ENCODE measurements at regions of chr5 and their contacts with region 1.

Region 1: GRCh38 chr5:142201471-142201887 is 92.9 kb downstream of the NDFIP1 start:
- DNase-seq: peak; percentile 85
- H3K4me3 ChIP-seq: no peak overlapping the region
- H3K27ac ChIP-seq: peak overlapping the region; percentile 91
- H3K4me1 ChIP-seq: peaks cover 40% of the 10 kb centered on the region
- H3K27me3 ChIP-seq: no peaks in the 10 kb centered on the region
- CTCF ChIP-seq: no peak
- POLR2A ChIP-seq: peak; percentile 58

Region 2: DNA sequence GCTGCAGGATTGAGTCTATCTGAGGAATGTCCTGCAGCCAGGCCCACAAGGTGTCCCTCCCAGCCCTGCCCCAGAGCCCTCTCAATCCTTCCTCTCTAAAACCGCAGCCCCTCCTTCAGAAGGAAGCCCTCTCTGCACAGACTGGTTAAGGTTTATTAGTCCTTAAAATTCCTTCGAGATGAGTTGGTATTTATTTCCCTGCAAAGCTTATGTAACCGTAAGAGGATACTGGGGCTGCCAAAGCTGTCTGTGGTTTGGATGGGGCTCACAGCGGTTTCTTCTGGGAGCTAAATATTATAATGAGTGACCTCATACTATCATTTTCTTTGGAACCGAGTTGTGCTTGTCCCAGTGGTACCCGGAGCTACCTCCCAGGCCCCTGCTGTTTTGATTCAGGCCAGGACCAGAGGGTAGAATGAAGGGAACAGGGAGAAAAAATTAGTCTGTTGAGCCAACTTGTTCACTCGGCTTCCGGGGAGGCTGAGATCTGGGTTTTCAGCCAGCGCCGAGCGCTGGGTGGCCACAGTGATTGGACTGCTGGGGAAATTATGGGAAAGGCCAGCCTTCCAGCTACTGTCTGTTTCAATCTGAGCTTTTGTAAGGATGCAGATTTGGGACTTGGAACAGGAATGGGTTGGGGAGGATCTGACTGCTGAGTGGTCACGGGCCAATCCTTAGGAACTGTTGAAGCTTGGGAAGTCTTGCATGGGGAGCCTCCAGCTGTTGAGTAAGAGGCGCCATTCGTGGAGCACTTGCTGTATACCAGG is 14.6 kb after region 1 on chr5:
- CTCF ChIA-PET with region 1: interaction called, 5 read pairs
- POLR2A ChIA-PET with region 1: no interaction called
- dilution Hi-C with region 1: no loop called
- intact Hi-C with region 1: loop called (anchors 1 kb)
- DNase-seq: peak; percentile 50
- H3K4me3 ChIP-seq: no peak overlapping the region
- H3K27ac ChIP-seq: peak overlapping the region; percentile 64
- H3K4me1 ChIP-seq: peaks cover 12% of the 10 kb centered on the region
- H3K27me3 ChIP-seq: no peaks in the 10 kb centered on the region
- CTCF ChIP-seq: no peak
- POLR2A ChIP-seq: no peak

Region 3: GRCh38 chr5:142246258-142246657 is 44.8 kb after region 1 on chr5:
- CTCF ChIA-PET with region 1: interaction called, 3 read pairs
- POLR2A ChIA-PET with region 1: no interaction called
- dilution Hi-C with region 1: no loop called
- intact Hi-C with region 1: loop called (anchors 1 kb)
- DNase-seq: peak; percentile 23
- H3K4me3 ChIP-seq: no peak overlapping the region
- H3K27ac ChIP-seq: peak overlapping the region; percentile 66
- H3K4me1 ChIP-seq: peaks cover 13% of the 10 kb centered on the region
- H3K27me3 ChIP-seq: no peaks in the 10 kb centered on the region
- CTCF ChIP-seq: no peak
- POLR2A ChIP-seq: no peak

Region 4: GRCh38 chr5:142316051-142316450 is 114.6 kb after region 1 on chr5:
- CTCF ChIA-PET with region 1: no interaction called
- POLR2A ChIA-PET with region 1: no interaction called
- dilution Hi-C with region 1: no loop called
- intact Hi-C with region 1: loop called (anchors 1 kb)
- DNase-seq: peak; percentile 82
- H3K4me3 ChIP-seq: no peak overlapping the region
- H3K27ac ChIP-seq: peak overlapping the region; percentile 57
- H3K4me1 ChIP-seq: peaks cover 68% of the 10 kb centered on the region
- H3K27me3 ChIP-seq: no peaks in the 10 kb centered on the region
- CTCF ChIP-seq: no peak
- POLR2A ChIP-seq: no peak

Region 5: DNA sequence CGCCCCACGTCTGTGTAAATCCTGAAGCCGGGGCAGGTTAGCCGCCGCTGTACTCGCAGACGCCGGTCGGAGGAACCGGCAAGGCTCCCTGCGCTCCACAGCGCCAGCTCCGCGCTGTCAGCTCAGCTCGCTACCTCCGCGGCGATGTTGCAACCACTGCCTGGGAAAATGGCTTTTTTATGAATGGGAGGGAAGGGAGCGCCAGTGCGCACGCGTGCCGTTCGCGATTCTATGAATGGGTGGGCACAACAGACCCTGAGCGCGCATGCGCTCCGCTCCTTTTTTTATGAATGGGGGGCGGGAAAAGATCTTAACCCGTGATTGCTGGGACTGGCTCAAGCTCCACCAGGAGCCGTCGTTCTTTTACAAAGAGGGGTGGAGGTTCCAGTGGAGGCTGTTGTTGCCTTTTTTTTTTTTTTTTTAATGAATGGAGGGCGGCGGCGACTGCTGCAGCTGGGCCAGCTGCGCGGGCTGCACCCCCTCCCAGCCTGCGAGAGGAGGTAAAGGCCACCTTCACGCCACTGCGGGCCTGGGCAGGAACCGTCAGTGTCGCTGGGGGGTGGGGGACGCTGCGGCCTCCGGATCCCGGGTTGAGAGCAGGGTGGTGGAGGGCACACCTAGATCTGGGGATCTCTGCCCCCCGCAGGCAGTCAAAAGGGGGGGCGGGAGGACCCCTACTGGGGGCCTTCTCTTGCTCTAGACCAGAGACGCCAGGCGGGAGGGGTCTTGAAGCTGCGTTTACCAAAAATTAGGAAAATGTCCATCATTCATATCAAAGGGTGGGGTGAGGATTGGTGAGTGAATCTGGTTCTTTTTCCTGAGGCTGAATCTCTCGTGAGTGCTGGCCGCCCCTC is 123.6 kb after region 1 on chr5 and contains the start of gene SPRY4:
- CTCF ChIA-PET with region 1: no interaction called
- POLR2A ChIA-PET with region 1: no interaction called
- dilution Hi-C with region 1: no loop called
- intact Hi-C with region 1: loop called (anchors 2 kb)
- DNase-seq: peak; percentile 98
- H3K4me3 ChIP-seq: peak within 1 kb of the TSS; percentile 76 to 89 (median 81)
- H3K27ac ChIP-seq: peak within 1 kb of the TSS; percentile 88
- H3K4me1 ChIP-seq: peaks cover 48% of the 10 kb centered on the region
- H3K27me3 ChIP-seq: no peaks in the 10 kb centered on the region
- CTCF ChIP-seq: no peak
- POLR2A ChIP-seq: peak; percentile 97
- total RNA-seq, gene SPRY4: 33.9 and 49.5 TPM in 2 replicates

Region 6: DNA sequence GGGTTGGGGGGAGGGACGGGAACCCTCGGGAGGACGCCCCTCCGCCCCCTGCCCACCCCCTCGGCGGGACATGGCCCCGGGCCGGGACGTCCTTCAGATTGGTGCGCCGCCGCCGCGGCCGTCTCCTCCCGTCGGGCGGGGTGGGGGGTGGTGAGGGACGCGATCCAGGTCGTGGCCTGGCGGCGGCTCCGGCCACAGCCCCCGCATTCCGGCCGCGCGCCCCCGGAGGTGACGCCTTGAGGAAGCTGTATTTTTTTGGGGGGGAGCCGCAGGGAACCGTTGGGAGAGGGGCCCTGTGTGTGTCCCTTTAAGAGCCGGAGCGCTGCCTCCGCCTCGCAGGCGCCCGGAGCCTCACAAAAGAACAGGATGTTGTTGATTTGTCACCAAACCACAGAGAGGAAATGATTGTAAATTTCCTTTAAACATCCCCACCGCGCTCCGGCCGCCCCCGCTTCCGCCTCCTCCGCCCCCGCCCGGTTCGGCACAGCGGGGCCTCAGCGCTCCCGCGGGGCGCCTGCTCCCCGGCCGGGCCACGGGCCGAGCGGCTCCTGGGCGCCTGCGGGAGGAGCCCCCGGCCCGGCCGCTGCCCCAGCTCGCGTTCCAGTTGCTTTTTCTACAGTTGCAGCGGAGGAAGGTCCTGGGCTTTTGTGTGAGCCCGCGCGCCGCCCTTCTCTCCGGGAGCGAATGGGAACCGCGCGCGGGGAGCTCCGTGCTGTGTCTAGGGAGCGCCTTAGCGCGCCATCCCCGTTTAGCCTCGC is 155.4 kb after region 1 on chr5:
- CTCF ChIA-PET with region 1: no interaction called
- POLR2A ChIA-PET with region 1: no interaction called
- dilution Hi-C with region 1: no loop called
- intact Hi-C with region 1: loop called (anchors 1 kb)
- DNase-seq: peak; percentile 94
- H3K4me3 ChIP-seq: peak overlapping the region in 1 of 3 experiments; percentile 54
- H3K27ac ChIP-seq: peak overlapping the region; percentile 74
- H3K4me1 ChIP-seq: peaks cover 31% of the 10 kb centered on the region
- H3K27me3 ChIP-seq: no peaks in the 10 kb centered on the region
- CTCF ChIP-seq: no peak
- POLR2A ChIP-seq: peak; percentile 47

Measured in endothelial cell of umbilical vein (primary cell).